SK-N-SH (cell line): ENCODE measurements at regions of chr11 and their contacts with region 1.

Region 1: DNA sequence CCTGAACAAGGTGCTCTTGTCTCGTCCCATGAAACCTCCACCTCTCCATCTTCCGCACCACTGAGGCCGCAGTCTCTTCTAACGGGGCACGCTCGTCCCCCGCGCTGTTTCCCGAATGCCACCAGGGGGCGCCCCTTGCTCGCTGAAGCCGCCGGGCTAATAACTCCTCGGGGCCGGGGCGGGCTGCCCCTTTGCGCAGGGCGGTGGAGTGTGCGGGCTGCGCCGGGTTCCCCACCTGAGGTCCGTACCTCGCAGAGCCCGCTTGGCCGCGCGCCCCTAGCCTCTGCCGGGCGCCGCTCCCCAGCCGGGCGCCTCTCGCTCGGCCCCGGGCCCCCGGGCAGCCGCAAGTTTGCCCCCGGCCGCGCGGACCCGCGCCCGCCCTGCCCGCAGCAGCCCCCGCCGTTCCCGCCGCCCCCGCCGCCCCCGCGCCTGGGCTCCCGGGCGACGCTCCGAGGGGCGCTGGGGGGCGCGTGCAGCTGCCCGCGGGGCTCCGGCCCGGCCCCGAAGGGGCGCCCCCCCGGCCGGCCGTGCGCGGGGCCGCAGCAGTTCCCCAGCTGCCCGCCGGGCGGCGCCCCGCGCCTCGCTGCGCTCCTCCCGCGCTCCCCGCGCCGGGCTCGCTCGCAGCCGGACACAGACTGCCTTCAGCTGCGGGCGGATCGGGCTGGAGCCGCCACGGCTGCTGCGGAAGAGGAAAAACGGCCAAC is at the start of gene GRIK4:
- DNase-seq: peak; percentile 96
- H3K4me3 ChIP-seq: peak within 1 kb of the TSS; percentile 54 to 56; a peak in 3 of 4 replicates
- H3K27ac ChIP-seq: no peak within 1 kb of the TSS; a peak in 1 of 4 replicates
- H3K4me1 ChIP-seq: peaks cover 0 to 20% of the 10 kb centered on the region in 2 experiments; a peak in 1 of 4 replicates
- H3K27me3 ChIP-seq: peaks cover 18% of the 10 kb centered on the region; the same call in 1 of the 2 replicates
- CTCF ChIP-seq: peak; percentile 90
- EP300 ChIP-seq: no peak
- RAD21 ChIP-seq: peak; percentile 96
- polyA plus RNA-seq, gene GRIK4: 0.02 and 0.03 TPM in 2 replicates

Region 2: GRCh38 chr11:120489799-120490198 is 21.5 kb before region 1 on chr11:
- CTCF ChIA-PET with region 1: interaction called, 15 read pairs
- POLR2A ChIA-PET with region 1: no interaction called
- DNase-seq: no peak
- H3K4me3 ChIP-seq: no peak overlapping the region
- H3K27ac ChIP-seq: no peak overlapping the region
- H3K4me1 ChIP-seq: peaks cover 0 to 2% of the 10 kb centered on the region in 2 experiments; a peak in 1 of 4 replicates
- H3K27me3 ChIP-seq: no peaks in the 10 kb centered on the region
- CTCF ChIP-seq: no peak
- EP300 ChIP-seq: no peak
- RAD21 ChIP-seq: no peak

Region 3: DNA sequence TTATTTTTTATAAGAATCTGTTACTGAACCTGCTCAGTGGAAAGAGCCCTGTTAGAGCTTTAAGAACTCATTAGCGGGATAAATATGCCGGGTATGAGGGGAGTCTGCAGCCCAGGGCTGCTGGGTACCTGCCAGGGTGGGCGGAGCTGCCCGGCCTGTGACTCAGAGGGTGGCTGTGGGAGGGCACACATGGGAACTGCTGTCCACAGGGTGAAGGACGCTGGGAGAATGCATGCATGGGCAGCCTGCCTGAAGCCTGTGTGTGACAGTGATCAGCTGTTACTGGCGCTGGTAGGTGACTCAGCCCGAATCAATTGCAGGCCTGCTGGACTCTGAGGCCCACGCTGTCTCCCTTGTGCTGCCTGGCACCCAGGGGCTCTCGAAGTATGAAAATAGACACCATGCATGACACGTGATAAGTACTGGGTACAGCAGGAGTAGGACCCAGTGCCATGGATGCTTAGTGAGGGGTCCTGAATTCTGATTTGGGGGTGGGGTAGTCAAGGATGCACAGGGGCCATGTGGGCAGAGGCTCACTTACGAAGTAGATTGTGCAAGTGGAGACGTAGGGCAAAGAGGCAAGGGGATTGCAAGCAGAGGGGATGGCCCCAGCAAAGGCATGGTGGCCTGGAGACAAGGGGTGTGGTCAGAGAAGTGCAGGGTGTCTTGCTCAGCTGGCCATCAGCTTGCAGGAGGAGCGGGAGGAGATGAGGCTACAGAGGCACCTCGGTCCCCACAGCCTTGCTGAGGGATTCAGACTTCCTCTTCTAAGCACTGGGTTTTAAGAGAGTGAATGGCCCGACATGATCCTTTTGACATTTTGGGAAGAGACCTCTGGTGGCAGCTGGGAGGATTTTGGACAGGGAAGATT is 36.8 kb after region 1 on chr11:
- CTCF ChIA-PET with region 1: interaction called, 20 read pairs
- POLR2A ChIA-PET with region 1: no interaction called
- DNase-seq: peak; percentile 90
- H3K4me3 ChIP-seq: no peak overlapping the region
- H3K27ac ChIP-seq: peak overlapping the region; percentile 76 to 87
- H3K4me1 ChIP-seq: peaks cover 23 to 36% of the 10 kb centered on the region in 2 experiments
- H3K27me3 ChIP-seq: no peaks in the 10 kb centered on the region
- CTCF ChIP-seq: peak; percentile 33
- EP300 ChIP-seq: peak; percentile 31 to 56; a peak in 1 of 4 replicates
- RAD21 ChIP-seq: peak; percentile 8; the same call in 1 of the 2 replicates

Region 4: GRCh38 chr11:120563708-120564572 is 52.7 kb after region 1 on chr11:
- CTCF ChIA-PET with region 1: no interaction called
- POLR2A ChIA-PET with region 1: no interaction called
- DNase-seq: no peak
- H3K4me3 ChIP-seq: no peak overlapping the region
- H3K27ac ChIP-seq: no peak overlapping the region
- H3K4me1 ChIP-seq: peaks cover 0 to 3% of the 10 kb centered on the region in 2 experiments; a peak in 1 of 4 replicates
- H3K27me3 ChIP-seq: no peaks in the 10 kb centered on the region
- CTCF ChIP-seq: no peak
- EP300 ChIP-seq: no peak
- RAD21 ChIP-seq: no peak

Region 5: GRCh38 chr11:120682866-120683265 is 171.6 kb after region 1 on chr11:
- CTCF ChIA-PET with region 1: interaction called, 168 read pairs
- POLR2A ChIA-PET with region 1: interaction called, 6 read pairs
- DNase-seq: no peak
- H3K4me3 ChIP-seq: no peak overlapping the region
- H3K27ac ChIP-seq: no peak overlapping the region
- H3K4me1 ChIP-seq: peaks cover 0 to 3% of the 10 kb centered on the region in 2 experiments; a peak in 1 of 4 replicates
- H3K27me3 ChIP-seq: peaks cover 8% of the 10 kb centered on the region; the same call in 1 of the 2 replicates
- CTCF ChIP-seq: no peak
- EP300 ChIP-seq: no peak
- RAD21 ChIP-seq: no peak

Region 6: GRCh38 chr11:120801801-120802689 is 290.8 kb after region 1 on chr11:
- CTCF ChIA-PET with region 1: interaction called, 58 read pairs
- POLR2A ChIA-PET with region 1: no interaction called
- DNase-seq: peak; percentile 83
- H3K4me3 ChIP-seq: no peak overlapping the region; a peak in 1 of 4 replicates
- H3K27ac ChIP-seq: no peak overlapping the region
- H3K4me1 ChIP-seq: peaks cover 0 to 18% of the 10 kb centered on the region in 2 experiments; a peak in 1 of 4 replicates
- H3K27me3 ChIP-seq: no peaks in the 10 kb centered on the region
- CTCF ChIP-seq: peak; percentile 80
- EP300 ChIP-seq: no peak
- RAD21 ChIP-seq: peak; percentile 85

Region 7: DNA sequence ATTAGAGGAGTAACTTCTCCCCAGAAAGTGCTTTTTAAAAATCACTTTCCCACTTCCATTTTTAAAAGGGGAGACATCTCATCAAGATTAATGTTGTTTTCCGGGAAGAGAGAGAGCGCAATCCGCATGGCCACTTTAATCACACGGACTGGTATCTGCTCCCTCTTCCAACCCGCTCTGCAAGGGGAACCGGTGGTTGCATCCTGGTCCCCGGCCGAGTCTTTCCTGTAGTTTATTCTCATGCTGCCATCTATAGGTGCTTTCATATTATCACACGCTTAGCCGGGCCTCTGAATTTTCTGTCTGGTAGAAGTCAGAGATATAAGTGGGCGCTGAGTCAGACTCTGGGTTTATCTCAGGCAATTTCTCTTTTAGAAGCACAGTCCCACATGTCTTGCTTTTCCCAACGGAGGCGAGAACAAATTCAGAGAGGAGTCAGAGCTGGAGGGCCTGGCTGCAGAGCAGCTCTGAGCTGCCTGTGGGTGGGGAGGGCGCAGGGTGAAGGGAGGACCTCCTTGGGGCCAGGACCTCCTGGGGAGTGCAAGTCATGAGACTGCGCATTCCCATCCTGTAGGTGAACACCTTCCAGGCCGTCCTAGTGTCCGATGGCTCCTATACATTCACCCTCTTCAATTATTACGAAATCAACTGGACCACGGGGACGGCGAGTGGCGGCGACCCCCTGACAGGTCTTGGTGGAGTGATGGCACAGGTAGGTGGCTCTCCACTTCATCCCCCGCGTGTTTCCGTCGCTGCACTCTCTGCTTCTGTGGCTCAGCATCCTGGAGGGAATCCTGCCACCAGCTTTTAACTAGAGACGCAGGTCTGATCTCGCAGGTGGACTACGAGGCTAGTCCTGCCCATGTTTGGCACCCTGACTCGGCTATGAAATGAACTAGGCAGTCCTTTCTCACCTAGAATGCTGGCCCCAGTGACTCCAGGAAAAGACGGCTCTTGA is 601.5 kb after region 1 on chr11:
- CTCF ChIA-PET with region 1: interaction called, 13 read pairs
- POLR2A ChIA-PET with region 1: no interaction called
- DNase-seq: peak; percentile 85
- H3K4me3 ChIP-seq: no peak overlapping the region; a peak in 1 of 4 replicates
- H3K27ac ChIP-seq: no peak overlapping the region
- H3K4me1 ChIP-seq: peaks cover 0 to 17% of the 10 kb centered on the region in 2 experiments; a peak in 2 of 4 replicates
- H3K27me3 ChIP-seq: no peaks in the 10 kb centered on the region
- CTCF ChIP-seq: peak; percentile 63
- EP300 ChIP-seq: peak in 1 of 2 experiments; percentile 36; a peak in 1 of 4 replicates
- RAD21 ChIP-seq: peak; percentile 94